ENCODE measurements at regions of chr6 and their contacts with region 1.

Region 1: DNA sequence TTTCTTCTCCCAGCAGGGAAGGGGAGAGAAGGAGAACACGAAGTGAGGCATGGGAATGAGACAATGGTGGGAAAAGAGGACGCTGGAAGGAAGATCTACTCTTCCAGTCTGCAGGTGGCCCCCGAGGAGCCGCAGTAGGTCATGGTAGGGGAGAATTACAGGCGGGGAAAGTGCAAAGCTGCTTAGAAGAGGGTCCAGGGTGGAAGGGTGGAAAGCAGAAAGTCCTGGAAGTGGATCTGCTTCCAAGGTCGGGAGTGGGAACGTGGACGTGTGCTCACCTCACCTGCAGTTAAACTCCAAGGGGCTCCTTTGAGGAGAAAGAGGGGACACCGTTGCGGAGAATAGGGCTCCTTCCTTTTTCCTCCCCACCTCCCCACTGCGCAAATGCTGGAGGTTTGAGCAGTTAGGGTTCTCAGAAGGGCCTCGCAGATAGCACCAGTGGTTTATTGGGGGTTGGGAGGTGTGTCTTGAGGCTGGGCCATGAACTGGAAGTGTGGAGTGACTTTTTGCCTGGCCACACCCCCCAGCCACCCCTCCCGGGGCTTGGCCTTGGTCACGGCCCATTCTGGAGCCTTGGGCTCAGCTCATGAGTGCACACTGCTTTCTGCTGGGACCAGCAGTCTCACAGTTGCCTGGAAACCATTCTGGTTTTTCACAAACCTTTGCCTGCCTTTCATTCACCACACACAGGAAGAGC is 100.4 kb upstream of the MLN start:
- DNase-seq: peak; percentile 40 to 89 (median 62)
- ATAC-seq: peak; percentile 82
- H3K4me3 ChIP-seq: peak overlapping the region; percentile 19
- H3K4me3 Mint-ChIP-seq: peak overlapping the region; percentile 43
- H3K27ac ChIP-seq: peak overlapping the region; percentile 62 to 72
- H3K27ac Mint-ChIP-seq: peak overlapping the region; percentile 85
- H3K4me1 ChIP-seq: peaks cover 70% of the 10 kb centered on the region
- H3K4me1 Mint-ChIP-seq: peaks cover 81% of the 10 kb centered on the region
- H3K27me3 ChIP-seq: no peaks in the 10 kb centered on the region
- H3K27me3 Mint-ChIP-seq: no peaks in the 10 kb centered on the region
- CTCF ChIP-seq: no peak

Region 2: DNA sequence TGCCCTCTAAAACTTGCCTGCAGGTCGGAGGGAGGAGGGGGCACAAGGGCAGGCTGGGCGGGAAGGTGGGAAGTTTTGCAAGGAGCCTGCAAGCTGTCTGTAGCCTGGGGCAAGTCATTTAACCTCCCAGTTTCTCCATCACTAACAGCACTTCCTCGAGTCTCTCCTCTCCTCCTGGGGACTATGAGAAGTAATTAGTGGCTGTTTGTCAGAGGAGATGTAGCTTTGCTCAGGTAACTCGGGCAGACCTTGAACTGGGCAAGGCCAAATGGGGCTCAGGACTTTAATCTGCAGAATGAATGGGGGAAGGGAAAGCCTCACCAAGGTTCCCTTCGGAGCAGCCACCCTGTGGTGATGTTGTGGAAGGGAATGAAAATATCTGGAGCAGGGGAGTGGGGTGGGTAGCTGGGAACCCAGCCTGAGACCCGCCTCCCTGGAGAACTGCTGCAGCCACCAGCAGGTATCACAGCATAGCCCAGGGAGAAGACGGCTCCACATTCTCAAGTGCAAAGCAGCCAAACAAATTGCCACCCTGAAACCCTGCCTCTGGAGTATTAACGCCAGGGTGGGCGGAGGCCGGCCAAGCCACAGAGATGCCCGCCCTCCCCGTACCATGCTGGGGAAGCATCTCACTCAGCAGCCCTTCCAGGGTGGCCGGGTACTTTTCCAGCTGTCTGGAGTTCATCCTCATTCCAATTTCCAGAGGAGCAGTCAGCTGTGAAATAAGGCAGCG is 109.1 kb before region 1 on chr6:
- CTCF ChIA-PET with region 1: no interaction called
- POLR2A ChIA-PET with region 1: no interaction called
- intact Hi-C with region 1: loop called in 1 of 2 experiments (anchors 5 kb)
- DNase-seq: no peak
- ATAC-seq: no peak
- H3K4me3 ChIP-seq: no peak overlapping the region
- H3K4me3 Mint-ChIP-seq: no peak overlapping the region
- H3K27ac ChIP-seq: no peak overlapping the region
- H3K27ac Mint-ChIP-seq: no peak overlapping the region
- H3K4me1 ChIP-seq: no peaks in the 10 kb centered on the region
- H3K4me1 Mint-ChIP-seq: no peaks in the 10 kb centered on the region
- H3K27me3 ChIP-seq: peaks cover 0 to 3% of the 10 kb centered on the region in 2 experiments
- H3K27me3 Mint-ChIP-seq: no peaks in the 10 kb centered on the region
- CTCF ChIP-seq: no peak

Region 3: DNA sequence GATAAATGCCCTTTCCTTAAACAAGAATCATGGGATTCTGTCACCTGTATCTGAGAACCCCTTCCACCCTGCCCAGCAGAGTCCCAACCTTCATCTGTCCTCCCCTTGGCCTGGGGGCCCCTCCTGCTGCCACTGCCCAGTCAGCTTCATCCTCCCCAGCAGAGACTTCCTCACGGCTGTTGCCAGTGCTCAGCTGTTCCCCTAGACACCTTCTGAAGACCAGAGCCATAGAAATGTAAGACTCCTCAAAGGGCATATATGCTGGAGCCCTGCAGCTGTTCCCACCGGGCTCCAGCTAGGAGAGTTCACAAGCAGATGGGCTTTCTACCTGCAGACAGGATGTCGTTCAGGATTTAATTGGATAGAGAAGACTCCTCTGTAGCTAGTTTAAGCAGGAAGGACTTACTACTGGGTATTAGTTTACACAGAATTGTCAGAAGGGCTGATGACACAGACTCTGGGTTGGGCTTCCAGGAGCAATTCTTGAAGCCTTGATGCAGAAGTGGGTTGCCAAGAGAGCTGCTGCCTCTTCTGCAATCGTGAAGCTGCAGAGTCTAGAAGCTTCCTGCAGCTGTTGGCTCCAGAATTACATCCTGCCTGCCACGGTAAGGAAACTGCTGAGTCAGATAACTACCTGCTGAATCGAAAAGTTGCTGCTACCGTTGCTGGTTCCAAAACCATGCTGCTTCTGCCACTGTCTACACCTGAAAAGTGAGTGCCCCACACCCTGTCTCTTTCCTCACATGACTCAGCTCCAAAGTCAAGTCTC is 43.3 kb before region 1 on chr6:
- CTCF ChIA-PET with region 1: no interaction called
- POLR2A ChIA-PET with region 1: interaction called, 20 read pairs
- intact Hi-C with region 1: loop called in 1 of 2 experiments (anchors 2 kb)
- DNase-seq: peak in 11 of 14 experiments; percentile 5 to 63 (median 34)
- ATAC-seq: peak; percentile 57
- H3K4me3 ChIP-seq: no peak overlapping the region
- H3K4me3 Mint-ChIP-seq: peak overlapping the region; percentile 39
- H3K27ac ChIP-seq: no peak overlapping the region
- H3K27ac Mint-ChIP-seq: peak overlapping the region; percentile 10
- H3K4me1 ChIP-seq: peaks cover 73% of the 10 kb centered on the region
- H3K4me1 Mint-ChIP-seq: peaks cover 71% of the 10 kb centered on the region
- H3K27me3 ChIP-seq: peaks cover 0 to 10% of the 10 kb centered on the region in 2 experiments
- H3K27me3 Mint-ChIP-seq: no peaks in the 10 kb centered on the region
- CTCF ChIP-seq: no peak

Region 4: DNA sequence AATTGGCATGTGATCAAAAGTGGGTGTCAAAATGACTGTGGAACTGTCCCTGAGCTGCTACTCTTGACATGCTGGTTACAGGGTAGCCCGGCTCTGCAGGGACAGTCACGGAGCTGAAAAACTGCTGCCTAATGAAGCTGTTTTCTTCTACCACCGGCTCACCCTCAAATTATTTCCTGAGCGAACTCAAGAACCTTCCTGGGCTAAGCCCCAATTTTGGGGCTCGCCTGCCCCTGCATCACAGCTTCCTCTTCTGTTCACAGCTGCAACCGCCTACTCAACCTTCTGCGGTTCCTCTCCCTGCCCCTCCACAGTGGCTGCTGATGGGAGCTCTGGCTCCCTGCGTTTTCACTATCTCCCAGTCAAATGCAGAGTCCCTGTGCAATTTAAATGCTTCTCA is 10.4 kb after region 1 on chr6:
- CTCF ChIA-PET with region 1: no interaction called
- POLR2A ChIA-PET with region 1: interaction called, 29 read pairs
- intact Hi-C with region 1: loop called in 1 of 2 experiments (anchors 1 kb)
- DNase-seq: peak in 13 of 14 experiments; percentile 24 to 75 (median 45)
- ATAC-seq: peak; percentile 92
- H3K4me3 ChIP-seq: peak overlapping the region; percentile 10
- H3K4me3 Mint-ChIP-seq: peak overlapping the region; percentile 81
- H3K27ac ChIP-seq: peak overlapping the region in 1 of 2 donors; percentile 55
- H3K27ac Mint-ChIP-seq: peak overlapping the region; percentile 71
- H3K4me1 ChIP-seq: peaks cover 57% of the 10 kb centered on the region
- H3K4me1 Mint-ChIP-seq: peaks cover 63% of the 10 kb centered on the region
- H3K27me3 ChIP-seq: no peaks in the 10 kb centered on the region
- H3K27me3 Mint-ChIP-seq: no peaks in the 10 kb centered on the region
- CTCF ChIP-seq: no peak

Region 5: DNA sequence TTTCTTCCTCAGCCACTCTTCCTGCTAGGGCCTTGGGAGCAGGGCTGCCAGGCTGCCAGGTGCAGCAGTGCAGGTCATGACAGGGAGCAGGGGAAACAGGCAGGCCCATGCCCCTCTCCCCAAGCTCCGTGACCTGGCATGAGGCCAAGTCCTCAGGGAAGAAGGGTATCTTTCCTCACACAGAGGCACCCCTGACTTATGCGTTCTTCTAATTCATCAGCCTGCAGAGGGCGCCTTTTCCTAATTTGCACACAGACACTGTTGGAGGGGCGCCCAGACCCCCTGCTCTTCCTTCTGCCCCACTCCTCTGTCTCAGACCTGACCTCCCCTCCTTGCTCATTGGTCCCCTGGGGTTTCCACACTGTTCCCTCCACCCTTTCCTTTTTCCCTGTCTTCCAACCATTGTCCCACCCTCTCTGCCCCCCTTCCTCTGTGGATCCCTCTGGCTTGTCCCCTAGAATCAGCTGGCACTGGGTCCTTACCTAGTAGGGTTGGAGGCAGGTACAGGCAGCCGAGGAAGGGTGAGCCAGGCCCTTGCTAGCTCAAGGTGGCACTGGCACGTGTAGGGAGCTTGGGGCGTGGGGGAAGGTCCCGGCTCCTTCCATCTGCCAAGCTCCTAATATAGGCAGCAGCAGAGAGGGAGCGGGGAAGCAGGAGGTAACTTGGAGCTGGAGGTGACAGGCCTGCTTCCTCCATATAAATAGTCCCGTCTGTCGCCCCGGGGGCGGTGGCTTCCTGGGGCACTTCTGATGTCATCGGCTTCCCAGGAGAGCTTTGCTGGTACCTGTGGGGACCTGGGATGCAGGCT is 54.5 kb after region 1 on chr6:
- CTCF ChIA-PET with region 1: no interaction called
- POLR2A ChIA-PET with region 1: no interaction called
- intact Hi-C with region 1: loop called in 1 of 2 experiments (anchors 10 kb)
- DNase-seq: peak in 2 of 14 experiments; percentile 17 to 19
- ATAC-seq: no peak
- H3K4me3 ChIP-seq: no peak overlapping the region
- H3K4me3 Mint-ChIP-seq: no peak overlapping the region
- H3K27ac ChIP-seq: no peak overlapping the region
- H3K27ac Mint-ChIP-seq: no peak overlapping the region
- H3K4me1 ChIP-seq: no peaks in the 10 kb centered on the region
- H3K4me1 Mint-ChIP-seq: peaks cover 5% of the 10 kb centered on the region
- H3K27me3 ChIP-seq: peaks cover 0 to 6% of the 10 kb centered on the region in 2 experiments
- H3K27me3 Mint-ChIP-seq: no peaks in the 10 kb centered on the region
- CTCF ChIP-seq: peak; percentile 18

Region 6: GRCh38 chr6:34094474-34095135 is 190.4 kb after region 1 on chr6:
- CTCF ChIA-PET with region 1: no interaction called
- POLR2A ChIA-PET with region 1: no interaction called
- intact Hi-C with region 1: no loop called
- DNase-seq: no peak
- ATAC-seq: no peak
- H3K4me3 ChIP-seq: no peak overlapping the region
- H3K4me3 Mint-ChIP-seq: no peak overlapping the region
- H3K27ac ChIP-seq: no peak overlapping the region
- H3K27ac Mint-ChIP-seq: no peak overlapping the region
- H3K4me1 ChIP-seq: no peaks in the 10 kb centered on the region
- H3K4me1 Mint-ChIP-seq: no peaks in the 10 kb centered on the region
- H3K27me3 ChIP-seq: peaks cover 7 to 17% of the 10 kb centered on the region in 2 experiments
- H3K27me3 Mint-ChIP-seq: peaks cover 38% of the 10 kb centered on the region
- CTCF ChIP-seq: no peak